ENCODE measurements at regions of chr12 and their contacts with region 1.

Region 1: GRCh38 chr12:50986966-50987737 is 34.8 kb downstream of the HIGD1C start:
- DNase-seq: peak in 1 of 2 donors; percentile 61
- ATAC-seq: peak; percentile 54 to 88 (median 79)
- H3K4me3 ChIP-seq: no peak overlapping the region
- H3K27ac ChIP-seq: peak overlapping the region in 3 of 10 donors; percentile 9 to 68 (median 54)
- H3K4me1 ChIP-seq: peaks cover 0 to 28% (median 19%) of the 10 kb centered on the region in 9 donors
- H3K27me3 ChIP-seq: no peaks in the 10 kb centered on the region
- CTCF ChIP-seq: peak in 8 of 9 donors; percentile 47 to 79 (median 66)

Region 2: DNA sequence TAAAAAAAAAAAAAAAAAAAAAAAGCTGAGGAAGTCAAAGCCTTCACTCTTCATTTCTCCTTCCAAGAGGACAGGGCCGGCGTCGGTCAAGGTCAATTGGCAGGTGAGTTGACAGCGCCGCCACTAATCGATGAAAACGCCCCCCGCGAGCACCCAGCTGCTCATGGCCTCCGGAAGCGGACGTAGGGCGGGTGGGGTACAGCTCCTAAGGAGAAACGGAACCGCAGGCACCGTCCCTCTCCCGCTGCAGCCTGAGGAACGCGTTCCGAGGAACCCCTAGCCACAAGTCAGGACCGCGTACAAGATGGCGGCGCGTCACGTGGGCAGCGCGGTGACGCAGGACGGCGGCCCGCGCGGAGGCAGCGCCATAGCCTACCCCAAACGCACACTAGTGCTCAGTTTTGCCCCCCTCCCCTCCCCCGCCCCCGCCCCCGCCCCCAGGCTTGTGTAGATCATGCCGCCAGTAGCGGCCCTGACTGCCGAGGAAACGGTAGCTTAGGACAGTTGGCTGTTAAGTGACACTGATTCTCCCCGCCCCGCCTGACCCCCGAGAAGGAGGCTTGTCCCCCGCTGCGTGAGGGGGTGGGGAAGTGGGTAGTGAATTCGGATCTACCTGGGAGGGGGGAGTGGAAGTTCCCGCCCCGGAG is 223.4 kb before region 1 on chr12 and contains the start of gene ATF1:
- intact Hi-C with region 1: loop called in 3 of 10 experiments (anchors 2 to 10 kb)
- DNase-seq: peak; percentile 88 to 90
- ATAC-seq: peak; percentile 93 to 97 (median 95)
- H3K4me3 ChIP-seq: peak within 1 kb of the TSS; percentile 59 to 100 (median 98)
- H3K27ac ChIP-seq: peak within 1 kb of the TSS; percentile 93 to 99 (median 98)
- H3K4me1 ChIP-seq: peaks cover 1 to 47% (median 27%) of the 10 kb centered on the region in 9 donors
- H3K27me3 ChIP-seq: no peaks in the 10 kb centered on the region
- CTCF ChIP-seq: no peak
- total RNA-seq, gene ATF1: 19.6 to 31.9 (median 24.3) TPM

Region 3: DNA sequence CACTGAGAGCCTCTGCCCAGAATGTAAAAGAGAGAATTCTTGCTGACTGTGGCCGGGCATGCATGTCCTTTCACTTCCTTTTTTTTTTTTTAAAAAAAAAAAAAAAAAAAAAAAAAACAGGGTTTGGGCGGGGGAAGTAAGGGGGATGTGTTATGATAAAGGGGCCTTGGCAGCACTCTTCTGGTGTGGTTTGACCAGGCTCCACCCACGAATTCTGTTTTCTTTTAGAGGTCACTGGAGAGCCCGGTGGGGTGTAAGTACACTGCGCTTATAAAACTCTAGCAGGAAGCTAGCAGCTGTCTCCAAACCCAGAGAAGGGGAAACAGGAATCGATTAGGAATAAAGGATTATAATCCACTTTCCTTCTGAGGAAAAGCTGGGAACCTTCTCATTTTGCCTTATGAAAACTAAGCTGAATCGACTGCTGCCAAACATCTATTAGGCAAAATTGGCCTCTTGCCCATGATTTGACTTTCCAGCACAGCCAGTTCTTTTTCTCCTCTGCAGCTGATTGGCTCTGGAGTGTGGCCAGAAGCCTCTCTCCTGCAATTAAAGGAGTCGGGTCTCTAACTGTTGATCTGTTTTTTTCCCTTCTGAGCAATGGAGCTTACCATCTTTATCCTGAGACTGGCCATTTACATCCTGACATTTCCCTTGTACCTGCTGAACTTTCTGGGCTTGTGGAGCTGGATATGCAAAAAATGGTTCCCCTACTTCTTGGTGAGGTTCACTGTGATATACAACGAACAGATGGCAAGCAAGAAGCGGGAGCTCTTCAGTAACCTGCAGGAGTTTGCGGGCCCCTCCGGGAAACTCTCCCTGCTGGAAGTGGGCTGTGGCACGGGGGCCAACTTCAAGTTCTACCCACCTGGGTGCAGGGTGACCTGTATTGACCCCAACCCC is 62.5 kb before region 1 on chr12:
- intact Hi-C with region 1: loop called in 6 of 10 experiments (anchors 2 to 10 kb)
- DNase-seq: peak; percentile 81 to 95
- ATAC-seq: peak; percentile 92 to 96 (median 94)
- H3K4me3 ChIP-seq: peak overlapping the region; percentile 60 to 88 (median 78)
- H3K27ac ChIP-seq: peak overlapping the region; percentile 77 to 94 (median 90)
- H3K4me1 ChIP-seq: peaks cover 0 to 65% (median 58%) of the 10 kb centered on the region in 9 donors
- H3K27me3 ChIP-seq: no peaks in the 10 kb centered on the region
- CTCF ChIP-seq: no peak

Region 4: GRCh38 chr12:50934981-50935807 is 52.0 kb before region 1 on chr12:
- intact Hi-C with region 1: loop called in 1 of 10 experiments (anchors 2 kb)
- DNase-seq: no peak
- ATAC-seq: peak in 6 of 8 donors; percentile 37 to 77 (median 49)
- H3K4me3 ChIP-seq: peak overlapping the region in 1 of 10 donors; percentile 12
- H3K27ac ChIP-seq: peak overlapping the region; percentile 37 to 85 (median 59)
- H3K4me1 ChIP-seq: peaks cover 6 to 41% (median 30%) of the 10 kb centered on the region in 9 donors
- H3K27me3 ChIP-seq: no peaks in the 10 kb centered on the region
- CTCF ChIP-seq: no peak

Measured in heart right ventricle (tissue), 16 donors.